Dendritic cell treated with granulocyte-macrophage colony-stimulating factor and Interleukin-4, amounts not matched to agents 40 ng/mL and 50 ng/mL, for 4 days (primary cell): ENCODE measurements at regions of chr6 and their contacts with region 1.

Region 1: DNA sequence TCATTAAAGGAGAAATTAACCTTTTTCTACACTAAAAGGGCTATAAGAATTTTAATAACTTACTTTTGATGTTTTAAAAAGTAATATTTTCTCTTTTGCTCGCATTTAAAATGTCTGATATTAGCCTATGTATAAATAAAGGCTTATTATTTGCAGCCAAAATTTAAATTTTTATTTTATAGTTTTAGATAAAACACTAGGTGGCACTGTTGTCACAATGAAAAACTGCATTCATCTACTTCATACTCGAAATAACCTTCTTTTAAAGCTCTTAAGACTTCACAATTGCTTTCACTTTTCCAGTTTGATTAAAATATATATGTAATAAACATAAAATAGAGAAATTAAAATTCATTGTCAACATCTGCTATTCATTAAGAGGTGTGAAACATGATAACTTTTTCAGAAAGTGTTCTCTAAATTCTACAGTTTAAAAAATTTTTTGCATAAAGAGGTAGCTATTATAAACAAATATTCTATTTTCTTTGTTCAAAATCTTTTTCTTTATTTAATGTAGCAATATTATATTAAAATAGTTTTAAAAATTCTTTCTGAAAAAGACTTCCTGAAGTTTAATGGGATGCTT is 78.8 kb upstream of the DEFB112 start:
- H3K4me3 Mint-ChIP-seq: no peak overlapping the region
- H3K27ac Mint-ChIP-seq: no peak overlapping the region
- H3K4me1 Mint-ChIP-seq: no peaks in the 10 kb centered on the region
- H3K27me3 Mint-ChIP-seq: no peaks in the 10 kb centered on the region

Region 2: DNA sequence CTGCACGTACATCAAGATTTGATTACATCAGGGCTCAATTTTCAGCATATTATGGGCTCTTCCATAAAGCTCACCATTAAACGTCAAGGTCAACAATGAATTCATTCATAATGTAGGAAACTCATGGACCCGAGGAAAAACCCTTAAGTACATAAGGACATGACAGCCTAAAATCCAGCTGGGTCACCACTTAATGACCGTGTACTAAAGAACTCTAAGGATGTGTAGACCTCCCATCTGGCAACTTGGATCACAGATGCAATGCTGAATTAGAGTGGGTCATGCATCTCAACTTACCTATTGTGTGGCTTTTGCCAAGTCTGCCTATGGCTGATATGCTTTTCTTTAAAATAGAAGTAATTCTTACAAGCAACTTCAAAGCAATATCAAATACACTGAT is 52.1 kb before region 1 on chr6:
- intact Hi-C with region 1: no loop called
- H3K4me3 Mint-ChIP-seq: no peak overlapping the region
- H3K27ac Mint-ChIP-seq: no peak overlapping the region
- H3K4me1 Mint-ChIP-seq: no peaks in the 10 kb centered on the region
- H3K27me3 Mint-ChIP-seq: no peaks in the 10 kb centered on the region

Region 3: DNA sequence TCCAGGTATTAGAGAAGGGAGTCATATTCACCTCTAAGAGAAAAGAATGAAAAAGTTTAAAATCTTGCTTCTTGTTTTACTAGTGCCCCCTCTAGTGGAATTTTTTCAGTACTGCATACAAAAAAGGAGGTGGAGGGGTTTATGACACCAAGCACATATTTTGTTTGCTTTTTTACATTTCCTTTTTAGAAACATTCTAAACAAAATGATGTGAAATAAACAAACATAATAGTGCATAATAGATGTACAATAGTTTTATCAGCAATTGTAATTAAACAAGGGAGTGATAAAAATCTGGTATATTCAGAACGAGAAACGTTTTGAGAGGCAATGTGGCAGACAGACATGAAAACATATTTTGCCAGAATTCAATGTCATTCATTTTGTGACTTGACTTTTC is 473.8 kb after region 1 on chr6:
- intact Hi-C with region 1: loop called (anchors 2 kb)
- H3K4me3 Mint-ChIP-seq: no peak overlapping the region
- H3K27ac Mint-ChIP-seq: no peak overlapping the region
- H3K4me1 Mint-ChIP-seq: peaks cover 4% of the 10 kb centered on the region
- H3K27me3 Mint-ChIP-seq: no peaks in the 10 kb centered on the region

Region 4: DNA sequence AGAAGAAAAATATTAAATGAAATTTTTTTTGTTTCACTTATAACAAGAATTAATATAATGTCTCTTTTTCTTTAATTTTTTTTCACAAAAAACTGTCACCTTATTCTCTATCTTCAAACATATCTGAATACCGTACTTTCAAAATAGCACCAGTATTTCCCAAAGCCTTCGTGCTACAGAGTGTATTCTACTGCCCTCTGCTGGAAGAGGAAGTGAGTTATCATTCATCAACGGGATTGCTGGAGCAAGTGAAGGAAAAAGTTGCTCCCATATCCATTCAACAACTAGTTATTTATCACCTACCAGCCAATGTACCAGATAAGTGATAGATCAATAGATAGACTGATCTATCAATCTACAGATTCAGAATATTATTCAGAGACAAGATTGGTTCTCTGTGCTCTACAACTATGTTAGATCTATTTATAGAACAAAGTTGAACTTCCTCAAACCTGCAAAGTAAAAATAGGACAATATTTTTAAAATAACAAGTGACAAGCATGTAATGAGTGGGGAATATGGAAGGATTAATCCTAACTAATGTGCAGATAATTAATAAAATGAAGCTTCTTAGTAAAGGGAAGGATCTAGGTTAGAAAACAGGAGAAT is 663.5 kb after region 1 on chr6:
- intact Hi-C with region 1: loop called (anchors 5 kb)
- H3K4me3 Mint-ChIP-seq: no peak overlapping the region
- H3K27ac Mint-ChIP-seq: no peak overlapping the region
- H3K4me1 Mint-ChIP-seq: no peaks in the 10 kb centered on the region
- H3K27me3 Mint-ChIP-seq: peaks cover 2% of the 10 kb centered on the region

Region 5: GRCh38 chr6:52020945-52021570 is 1892.5 kb after region 1 on chr6:
- intact Hi-C with region 1: loop called (anchors 5 kb)
- H3K4me3 Mint-ChIP-seq: no peak overlapping the region
- H3K27ac Mint-ChIP-seq: no peak overlapping the region
- H3K4me1 Mint-ChIP-seq: no peaks in the 10 kb centered on the region
- H3K27me3 Mint-ChIP-seq: no peaks in the 10 kb centered on the region